Heart right ventricle (tissue), 16 donors: ENCODE measurements at regions of chr3 and their contacts with region 1.

Region 1: GRCh38 chr3:43455233-43455632 is 166.6 kb downstream of the ANO10 start:
- DNase-seq: no peak
- ATAC-seq: peak in 5 of 8 donors; percentile 22 to 96 (median 61)
- H3K4me3 ChIP-seq: no peak overlapping the region
- H3K27ac ChIP-seq: no peak overlapping the region
- H3K4me1 ChIP-seq: peaks cover 0 to 6% (median 0%) of the 10 kb centered on the region in 9 donors
- H3K27me3 ChIP-seq: no peaks in the 10 kb centered on the region
- CTCF ChIP-seq: no peak

Region 2: DNA sequence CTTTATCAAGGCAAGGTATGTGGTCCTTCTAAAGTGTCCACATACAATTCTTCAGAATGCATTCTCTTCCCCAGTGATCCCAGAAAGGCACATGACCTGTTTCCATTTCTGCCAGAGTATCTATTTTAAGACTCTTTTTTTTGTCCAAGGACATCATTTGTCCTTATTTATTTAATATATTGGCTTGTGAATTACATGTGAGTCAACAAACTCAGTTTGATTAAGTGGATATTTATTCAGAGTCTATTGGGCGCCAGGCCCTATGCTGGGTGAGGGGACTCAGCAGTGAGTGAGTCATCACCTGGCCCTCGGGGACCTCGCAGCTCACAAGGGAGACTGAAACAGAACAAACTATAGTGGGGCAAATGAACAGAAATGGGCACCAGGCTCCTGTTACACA is 32.1 kb before region 1 on chr3:
- intact Hi-C with region 1: no loop called
- DNase-seq: peak; percentile 23 to 27
- ATAC-seq: peak in 6 of 8 donors; percentile 33 to 58 (median 46)
- H3K4me3 ChIP-seq: no peak overlapping the region
- H3K27ac ChIP-seq: peak overlapping the region in 9 of 10 donors; percentile 8 to 93 (median 80)
- H3K4me1 ChIP-seq: peaks cover 2 to 57% (median 33%) of the 10 kb centered on the region in 9 donors
- H3K27me3 ChIP-seq: no peaks in the 10 kb centered on the region
- CTCF ChIP-seq: no peak

Region 3: GRCh38 chr3:43442872-43443395 is 12.3 kb before region 1 on chr3:
- intact Hi-C with region 1: loop called in 1 of 10 experiments (anchors 1 kb)
- DNase-seq: no peak
- ATAC-seq: no peak
- H3K4me3 ChIP-seq: no peak overlapping the region
- H3K27ac ChIP-seq: no peak overlapping the region
- H3K4me1 ChIP-seq: no peaks in the 10 kb centered on the region
- H3K27me3 ChIP-seq: no peaks in the 10 kb centered on the region
- CTCF ChIP-seq: no peak

Region 4: GRCh38 chr3:43497905-43498365 is 42.7 kb after region 1 on chr3:
- intact Hi-C with region 1: no loop called
- DNase-seq: peak in 1 of 2 donors; percentile 11
- ATAC-seq: peak in 7 of 8 donors; percentile 22 to 56 (median 37)
- H3K4me3 ChIP-seq: no peak overlapping the region
- H3K27ac ChIP-seq: peak overlapping the region in 7 of 10 donors; percentile 9 to 71 (median 51)
- H3K4me1 ChIP-seq: peaks cover 0 to 45% (median 18%) of the 10 kb centered on the region in 9 donors
- H3K27me3 ChIP-seq: no peaks in the 10 kb centered on the region
- CTCF ChIP-seq: no peak

Region 5: DNA sequence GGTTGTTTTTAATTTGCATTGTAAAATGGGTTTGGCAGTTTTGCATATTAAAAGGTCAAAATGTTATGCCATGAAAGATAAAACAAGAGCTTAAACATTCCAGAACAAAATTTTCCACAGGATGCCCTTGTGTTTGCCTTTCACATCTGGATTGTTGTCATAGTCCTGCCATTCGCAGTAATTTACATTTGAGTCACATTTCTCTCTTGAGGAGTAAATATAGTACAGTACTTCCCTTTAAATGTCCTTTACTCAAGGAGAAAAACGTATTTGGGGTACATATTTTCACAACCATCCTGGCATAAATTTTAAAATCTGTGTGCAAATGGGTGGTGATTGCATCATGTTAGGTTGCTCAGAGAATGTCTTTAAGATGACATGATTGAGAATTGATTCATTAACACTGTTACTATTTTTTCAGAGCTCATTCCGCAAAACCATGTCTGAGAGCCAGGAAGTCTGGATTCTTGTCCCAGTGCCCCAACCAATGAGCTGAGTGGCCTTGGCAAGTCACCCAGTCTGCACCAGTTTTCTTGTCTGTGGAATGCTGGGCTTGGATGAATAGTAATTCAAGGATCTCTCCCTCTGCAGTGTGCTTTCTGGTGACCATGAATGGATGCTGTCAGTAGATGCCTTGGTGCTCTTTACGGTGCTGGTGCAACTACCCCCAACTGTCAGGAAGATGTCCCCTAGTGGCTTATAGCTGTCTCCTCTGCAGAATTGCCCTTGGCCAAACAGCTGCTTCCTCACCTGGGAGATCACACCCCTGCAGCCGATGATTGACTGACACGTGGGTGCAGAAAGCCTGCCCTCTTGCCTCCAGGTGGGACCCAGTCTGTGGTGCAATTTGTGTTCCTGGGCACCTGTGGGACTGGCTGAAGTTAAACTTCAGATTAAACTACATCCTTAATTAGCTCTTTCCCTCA is 278.5 kb after region 1 on chr3:
- intact Hi-C with region 1: no loop called
- DNase-seq: peak; percentile 39 to 68
- ATAC-seq: peak; percentile 65 to 94 (median 82)
- H3K4me3 ChIP-seq: no peak overlapping the region
- H3K27ac ChIP-seq: peak overlapping the region in 8 of 10 donors; percentile 8 to 81 (median 36)
- H3K4me1 ChIP-seq: peaks cover 0 to 15% (median 7%) of the 10 kb centered on the region in 9 donors
- H3K27me3 ChIP-seq: no peaks in the 10 kb centered on the region
- CTCF ChIP-seq: peak in 1 of 9 donors; percentile 5